WTC11 (cell line): ENCODE measurements at regions of chr3 and their contacts with region 1.

Region 1: DNA sequence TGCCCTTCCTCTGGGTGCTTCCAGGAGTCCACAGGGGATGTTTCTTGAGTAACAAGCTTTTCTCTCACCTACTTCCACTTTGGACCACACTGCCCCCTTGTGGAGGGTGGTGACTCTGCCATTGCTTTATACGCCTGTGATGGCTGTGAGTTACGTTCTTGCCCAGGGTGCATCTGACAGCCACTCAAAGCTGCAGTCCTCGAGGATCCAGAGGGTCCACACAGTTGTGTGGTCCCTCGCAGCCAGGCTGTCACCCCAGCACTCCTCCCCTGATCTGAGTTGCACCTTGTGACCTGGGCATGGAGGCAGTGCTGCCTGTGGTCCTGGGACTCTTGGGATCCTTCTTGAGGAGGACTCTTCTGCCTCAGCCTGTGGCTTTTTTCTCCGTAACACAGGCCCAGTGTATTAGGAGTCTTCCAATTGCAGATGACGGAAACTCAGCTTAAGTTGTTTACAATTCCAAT is 23.4 kb downstream of the FOXL2 start:
- DNase-seq: peak; percentile 95
- ATAC-seq: peak; percentile 94
- H3K4me3 Mint-ChIP-seq: no peak overlapping the region
- H3K27ac Mint-ChIP-seq: no peak overlapping the region
- H3K4me1 Mint-ChIP-seq: no peaks in the 10 kb centered on the region
- H3K27me3 Mint-ChIP-seq: no peaks in the 10 kb centered on the region; the same call in 1 of the 2 replicates
- CTCF ChIP-seq: peak; percentile 90

Region 2: GRCh38 chr3:138479438-138479863 is 444.1 kb before region 1 on chr3:
- CTCF ChIA-PET with region 1: interaction called, 58 read pairs
- POLR2A ChIA-PET with region 1: no interaction called
- DNase-seq: peak; percentile 71
- ATAC-seq: peak; percentile 91
- H3K4me3 Mint-ChIP-seq: no peak overlapping the region
- H3K27ac Mint-ChIP-seq: no peak overlapping the region
- H3K4me1 Mint-ChIP-seq: peaks cover 4% of the 10 kb centered on the region
- H3K27me3 Mint-ChIP-seq: no peaks in the 10 kb centered on the region; the same call in 1 of the 2 replicates
- CTCF ChIP-seq: peak; percentile 57

Region 3: GRCh38 chr3:138594150-138594934 is 329.2 kb before region 1 on chr3 and contains the start of gene CEP70:
- CTCF ChIA-PET with region 1: interaction called, 67 read pairs
- POLR2A ChIA-PET with region 1: interaction called, 5 read pairs
- DNase-seq: peak; percentile 95
- ATAC-seq: peak; percentile 93
- H3K4me3 Mint-ChIP-seq: peak within 1 kb of the TSS; percentile 96
- H3K27ac Mint-ChIP-seq: peak within 1 kb of the TSS; percentile 95
- H3K4me1 Mint-ChIP-seq: peaks cover 21% of the 10 kb centered on the region
- H3K27me3 Mint-ChIP-seq: no peaks in the 10 kb centered on the region
- CTCF ChIP-seq: peak; percentile 86
- total RNA-seq, gene CEP70: 27.2 to 34.8 TPM (median 33.5 TPM) in 3 replicates

Region 4: GRCh38 chr3:138694287-138695007 is 229.1 kb before region 1 on chr3:
- CTCF ChIA-PET with region 1: interaction called, 152 read pairs
- POLR2A ChIA-PET with region 1: interaction called, 3 read pairs
- DNase-seq: no peak
- ATAC-seq: no peak
- H3K4me3 Mint-ChIP-seq: no peak overlapping the region
- H3K27ac Mint-ChIP-seq: no peak overlapping the region
- H3K4me1 Mint-ChIP-seq: no peaks in the 10 kb centered on the region
- H3K27me3 Mint-ChIP-seq: no peaks in the 10 kb centered on the region
- CTCF ChIP-seq: no peak

Region 5: GRCh38 chr3:138717348-138717747 is 206.2 kb before region 1 on chr3:
- CTCF ChIA-PET with region 1: interaction called, 10 read pairs
- POLR2A ChIA-PET with region 1: no interaction called
- DNase-seq: no peak
- ATAC-seq: no peak
- H3K4me3 Mint-ChIP-seq: no peak overlapping the region
- H3K27ac Mint-ChIP-seq: no peak overlapping the region
- H3K4me1 Mint-ChIP-seq: no peaks in the 10 kb centered on the region
- H3K27me3 Mint-ChIP-seq: no peaks in the 10 kb centered on the region
- CTCF ChIP-seq: no peak

Region 6: DNA sequence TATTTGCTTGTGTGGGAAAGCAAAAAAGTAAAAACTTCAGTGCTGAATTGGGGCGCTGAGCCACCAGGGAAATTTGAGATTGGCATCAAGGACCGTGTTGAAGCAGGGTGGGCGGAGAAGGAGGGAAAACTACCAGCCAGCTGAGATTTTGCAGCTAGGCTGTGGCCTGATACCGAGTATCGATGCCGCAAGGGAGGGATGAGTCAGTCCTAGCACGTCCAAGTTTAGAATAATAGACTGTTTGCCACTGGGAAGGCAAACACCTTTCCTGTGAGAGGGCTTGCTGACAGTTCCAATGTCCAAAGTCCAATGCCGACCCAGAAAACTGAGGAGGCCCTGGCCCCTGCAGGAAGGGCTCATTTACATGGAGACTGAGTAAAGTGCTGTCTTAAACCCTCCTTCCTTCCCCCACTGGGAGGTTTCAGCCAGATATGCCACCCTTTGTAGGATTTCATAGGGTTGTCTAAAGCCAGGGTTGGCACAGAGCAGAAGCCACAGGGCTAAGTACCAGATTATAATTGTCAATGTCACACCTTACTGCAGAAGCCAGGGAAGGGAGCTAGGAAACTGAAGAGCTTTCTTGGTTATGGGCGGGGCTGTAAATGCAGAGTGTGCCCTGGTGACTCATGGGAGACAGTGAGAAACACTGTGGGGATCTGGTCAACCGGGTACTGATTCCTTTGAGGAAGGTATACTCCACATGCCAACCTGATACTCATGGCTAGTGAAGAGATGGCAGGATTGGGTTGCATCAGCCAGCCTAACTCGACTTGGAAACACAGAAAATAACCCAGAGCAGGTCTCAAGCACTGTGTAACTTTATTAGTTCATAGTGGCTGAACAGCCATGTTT is 60.4 kb before region 1 on chr3:
- CTCF ChIA-PET with region 1: interaction called, 11 read pairs
- POLR2A ChIA-PET with region 1: interaction called, 3 read pairs
- DNase-seq: peak; percentile 35
- ATAC-seq: peak; percentile 59
- H3K4me3 Mint-ChIP-seq: peak overlapping the region; percentile 50
- H3K27ac Mint-ChIP-seq: peak overlapping the region; percentile 94
- H3K4me1 Mint-ChIP-seq: peaks cover 36% of the 10 kb centered on the region
- H3K27me3 Mint-ChIP-seq: no peaks in the 10 kb centered on the region; the same call in 1 of the 2 replicates
- CTCF ChIP-seq: no peak

Region 7: GRCh38 chr3:138941259-138941885 is 17.8 kb after region 1 on chr3:
- CTCF ChIA-PET with region 1: interaction called, 138 read pairs
- POLR2A ChIA-PET with region 1: interaction called, 3 read pairs
- DNase-seq: peak; percentile 85
- ATAC-seq: peak; percentile 4
- H3K4me3 Mint-ChIP-seq: no peak overlapping the region
- H3K27ac Mint-ChIP-seq: no peak overlapping the region
- H3K4me1 Mint-ChIP-seq: peaks cover 59% of the 10 kb centered on the region
- H3K27me3 Mint-ChIP-seq: peaks cover 98% of the 10 kb centered on the region
- CTCF ChIP-seq: peak; percentile 71